ENCODE measurements at regions of chr6 and their contacts with region 1.

Region 1: GRCh38 chr6:152982768-152983636 is at the start of gene FBXO5:
- DNase-seq: peak; percentile 98
- H3K4me3 ChIP-seq: peak within 1 kb of the TSS; percentile 68 to 84 (median 81)
- H3K27ac ChIP-seq: peak within 1 kb of the TSS; percentile 82
- H3K4me1 ChIP-seq: peaks cover 14% of the 10 kb centered on the region
- H3K27me3 ChIP-seq: no peaks in the 10 kb centered on the region
- CTCF ChIP-seq: no peak
- total RNA-seq, gene FBXO5: 2.2 to 18.9 TPM

Region 2: DNA sequence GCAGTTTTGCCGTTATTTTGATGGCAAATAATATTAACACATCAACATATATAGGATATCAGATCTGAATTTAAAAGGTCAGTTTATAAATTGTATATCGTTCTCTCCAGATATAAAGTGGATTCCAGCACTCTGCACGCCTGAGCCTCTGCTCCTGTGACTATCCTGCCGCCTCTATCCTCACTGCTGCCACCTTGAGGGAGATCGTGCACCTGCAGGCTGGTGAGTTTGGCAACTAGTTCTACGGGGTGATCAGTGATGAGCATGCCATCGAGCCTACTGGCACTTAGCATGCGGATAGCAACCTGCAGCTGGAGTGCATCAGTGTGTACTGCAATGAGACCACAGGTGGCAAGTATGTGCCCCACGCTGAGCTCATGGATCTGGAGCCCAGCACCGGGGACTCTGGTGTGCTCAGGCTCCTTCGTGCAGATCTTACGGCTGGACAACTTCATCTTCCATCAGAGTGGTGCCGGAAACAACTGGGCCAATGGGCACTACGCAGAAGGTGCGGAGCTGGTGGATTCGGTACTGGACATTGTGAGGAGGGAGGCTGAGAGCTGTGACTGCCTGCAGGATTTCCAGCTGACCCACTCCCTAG is 85.1 kb before region 1 on chr6:
- CTCF ChIA-PET with region 1: no interaction called
- dilution Hi-C with region 1: no loop called
- in situ Hi-C with region 1: no loop called
- intact Hi-C with region 1: no loop called
- DNase-seq: peak; percentile 56
- H3K4me3 ChIP-seq: no peak overlapping the region
- H3K27ac ChIP-seq: no peak overlapping the region
- H3K4me1 ChIP-seq: no peaks in the 10 kb centered on the region
- H3K27me3 ChIP-seq: no peaks in the 10 kb centered on the region
- CTCF ChIP-seq: peak; percentile 92 to 96

Region 3: DNA sequence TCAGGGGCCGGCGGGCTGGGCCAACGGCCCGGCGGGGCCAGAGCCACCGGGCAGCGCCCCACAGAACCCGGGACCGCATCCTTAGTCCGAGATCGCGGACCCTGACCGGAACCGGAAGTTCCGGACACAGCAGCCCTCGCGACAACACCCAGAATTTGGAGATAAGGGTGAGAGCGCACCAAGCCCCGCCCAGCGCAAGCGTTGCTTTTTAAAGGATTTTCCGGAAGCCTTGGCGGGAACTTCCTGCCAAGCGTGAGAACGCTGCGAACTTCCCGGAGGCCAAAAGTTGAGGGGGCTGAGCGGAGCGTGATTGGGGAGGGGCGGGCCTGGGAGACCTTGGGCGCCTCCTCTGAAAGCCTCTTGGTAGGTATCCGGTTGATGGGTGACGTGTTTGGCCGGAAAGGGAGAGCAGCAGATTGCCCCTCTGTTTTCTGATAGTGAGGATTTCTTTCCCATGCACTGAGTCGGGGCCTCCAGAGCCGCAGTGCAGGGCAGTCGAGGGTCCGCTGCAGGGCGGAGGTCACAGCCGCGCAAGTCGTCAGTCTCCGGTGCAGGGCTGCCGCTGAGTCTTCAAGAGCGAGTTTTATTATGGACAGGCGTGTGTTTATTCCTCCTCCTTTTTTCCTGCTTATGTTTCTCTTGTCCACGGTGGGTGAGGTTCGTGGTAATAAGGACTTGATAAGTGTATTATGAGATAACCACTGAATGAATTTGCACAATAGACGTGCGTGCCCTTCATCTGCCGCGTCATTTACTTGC is 19.8 kb after region 1 on chr6 and contains the start of gene MTRF1L:
- CTCF ChIA-PET with region 1: no interaction called
- dilution Hi-C with region 1: no loop called
- in situ Hi-C with region 1: no loop called
- intact Hi-C with region 1: loop called (anchors 2 kb)
- DNase-seq: peak; percentile 95
- H3K4me3 ChIP-seq: peak within 1 kb of the TSS; percentile 82 to 99 (median 84)
- H3K27ac ChIP-seq: peak within 1 kb of the TSS; percentile 75
- H3K4me1 ChIP-seq: peaks cover 17% of the 10 kb centered on the region
- H3K27me3 ChIP-seq: no peaks in the 10 kb centered on the region
- CTCF ChIP-seq: peak in 1 of 2 donors; percentile 1
- total RNA-seq, gene MTRF1L: 15.2 to 27.0 TPM

Region 4: GRCh38 chr6:153117986-153118879 is 135.2 kb after region 1 on chr6:
- CTCF ChIA-PET with region 1: no interaction called
- dilution Hi-C with region 1: no loop called
- in situ Hi-C with region 1: no loop called
- intact Hi-C with region 1: loop called (anchors 5 kb)
- DNase-seq: peak; percentile 88
- H3K4me3 ChIP-seq: no peak overlapping the region
- H3K27ac ChIP-seq: peak overlapping the region; percentile 80
- H3K4me1 ChIP-seq: peaks cover 14% of the 10 kb centered on the region
- H3K27me3 ChIP-seq: no peaks in the 10 kb centered on the region
- CTCF ChIP-seq: no peak